Caco-2 (cell line): ENCODE measurements at regions of chr11 and their contacts with region 1.

Region 1: DNA sequence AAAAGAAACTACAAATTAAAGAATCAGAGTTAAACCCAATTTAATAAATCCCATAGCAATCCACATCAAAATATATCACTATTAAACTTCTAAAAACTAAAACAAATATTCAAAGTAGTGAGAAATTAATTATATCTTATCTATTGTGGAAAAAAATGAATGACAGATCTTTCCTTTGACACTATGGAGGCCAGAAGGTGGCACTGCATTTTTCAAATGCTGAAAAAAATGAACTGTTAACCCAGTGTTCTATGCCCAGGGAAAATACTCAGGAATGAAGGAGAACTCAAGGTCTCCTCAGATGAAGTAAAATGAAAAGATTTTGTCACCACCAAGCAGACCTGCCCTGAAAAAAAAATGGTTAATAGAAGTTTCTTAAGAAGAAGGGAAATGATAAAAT is 27.7 kb downstream of the TYR start:
- DNase-seq: no peak
- H3K4me3 ChIP-seq: no peak overlapping the region
- H3K4me3 Mint-ChIP-seq: no peak overlapping the region
- H3K27ac Mint-ChIP-seq: no peak overlapping the region
- H3K4me1 ChIP-seq: no peaks in the 10 kb centered on the region
- H3K4me1 Mint-ChIP-seq: no peaks in the 10 kb centered on the region
- H3K27me3 ChIP-seq: no peaks in the 10 kb centered on the region
- H3K27me3 Mint-ChIP-seq: peaks cover 7% of the 10 kb centered on the region
- CTCF ChIP-seq: peak; percentile 21 to 45

Region 2: DNA sequence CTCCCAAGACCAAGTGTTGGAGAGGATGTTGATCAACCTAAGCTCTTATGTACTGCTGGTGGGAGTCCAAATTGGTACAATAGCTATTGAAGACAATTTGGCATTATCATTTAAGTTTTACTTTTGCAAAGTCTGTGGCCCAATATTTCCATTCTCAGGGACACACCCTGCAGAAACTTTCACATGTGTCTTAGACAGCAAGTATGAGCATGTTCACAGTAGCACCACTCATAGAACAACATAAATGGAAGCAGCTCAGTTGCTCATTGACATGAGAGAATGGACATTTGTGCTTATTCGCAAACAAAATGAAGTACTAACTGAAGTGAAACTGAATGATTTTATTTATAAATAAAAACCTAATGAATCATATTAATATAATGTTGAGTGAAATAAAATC is 150.3 kb after region 1 on chr11:
- CTCF ChIA-PET with region 1: no interaction called
- POLR2A ChIA-PET with region 1: no interaction called
- intact Hi-C with region 1: loop called (anchors 10 kb)
- DNase-seq: no peak
- H3K4me3 ChIP-seq: no peak overlapping the region
- H3K4me3 Mint-ChIP-seq: no peak overlapping the region
- H3K27ac Mint-ChIP-seq: no peak overlapping the region
- H3K4me1 ChIP-seq: no peaks in the 10 kb centered on the region
- H3K4me1 Mint-ChIP-seq: no peaks in the 10 kb centered on the region
- H3K27me3 ChIP-seq: no peaks in the 10 kb centered on the region
- H3K27me3 Mint-ChIP-seq: no peaks in the 10 kb centered on the region
- CTCF ChIP-seq: no peak

Region 3: DNA sequence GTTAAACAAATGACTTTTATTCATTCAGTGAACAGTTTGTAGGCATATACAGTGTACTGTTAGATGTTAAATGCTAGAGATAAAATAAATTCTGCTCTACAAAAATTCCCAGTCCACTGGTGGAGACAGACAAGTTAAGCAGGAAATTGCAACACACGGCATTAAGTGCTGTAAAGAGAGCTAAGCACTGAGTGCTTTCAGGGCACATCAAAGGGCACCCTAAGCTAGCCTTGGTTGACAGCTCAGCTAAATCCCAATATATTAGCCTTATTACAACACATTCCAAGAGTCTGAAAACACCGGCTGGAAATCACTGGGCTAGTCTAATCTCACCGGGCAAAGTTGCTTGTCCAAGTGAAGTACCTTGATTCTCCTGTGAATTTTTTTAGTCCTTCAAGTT is 230.7 kb after region 1 on chr11:
- CTCF ChIA-PET with region 1: no interaction called
- POLR2A ChIA-PET with region 1: no interaction called
- intact Hi-C with region 1: loop called (anchors 10 kb)
- DNase-seq: peak; percentile 56 to 71
- H3K4me3 ChIP-seq: no peak overlapping the region
- H3K4me3 Mint-ChIP-seq: no peak overlapping the region
- H3K27ac Mint-ChIP-seq: no peak overlapping the region
- H3K4me1 ChIP-seq: no peaks in the 10 kb centered on the region
- H3K4me1 Mint-ChIP-seq: no peaks in the 10 kb centered on the region
- H3K27me3 ChIP-seq: no peaks in the 10 kb centered on the region
- H3K27me3 Mint-ChIP-seq: no peaks in the 10 kb centered on the region
- CTCF ChIP-seq: no peak